ENCODE measurements at regions of chrX and their contacts with region 1.

Region 1: DNA sequence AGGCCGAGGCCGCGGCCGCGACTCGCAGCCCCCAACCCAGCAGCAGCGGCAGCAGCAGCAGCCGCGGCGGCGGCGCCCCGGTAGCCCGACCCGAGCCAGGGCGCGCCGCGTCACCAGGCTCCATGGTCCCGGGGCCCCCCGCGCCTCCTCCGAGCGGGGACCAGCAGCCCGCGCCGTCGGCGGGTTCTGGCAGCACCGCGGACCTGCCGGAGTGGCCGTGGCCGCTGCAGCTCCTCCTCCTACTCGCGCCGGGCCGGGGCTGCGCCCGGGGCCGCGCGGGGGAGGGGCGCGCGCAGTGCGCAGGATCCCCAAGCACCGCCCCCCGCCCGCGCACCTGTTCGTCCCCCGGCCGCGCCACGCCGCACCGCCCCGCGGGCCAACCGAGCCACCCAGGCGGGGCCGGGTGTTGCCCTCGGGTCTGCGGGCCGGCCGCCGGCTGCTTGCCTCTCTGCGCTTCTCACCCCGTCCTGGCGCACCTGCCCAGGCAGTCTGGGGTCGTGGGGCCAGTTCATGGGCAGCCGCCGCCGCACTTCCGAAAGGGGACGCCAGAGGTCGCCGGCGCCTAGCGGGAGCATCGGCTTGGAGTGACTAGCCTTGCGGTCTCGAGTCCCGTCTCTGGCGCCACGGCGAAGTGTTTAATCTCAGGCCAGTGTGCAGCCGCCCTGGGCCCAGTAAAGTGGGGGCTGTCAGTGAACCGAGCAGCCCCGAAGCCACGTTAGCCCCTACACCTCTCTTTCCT is at the start of gene SLC9A7:
- DNase-seq: peak; percentile 20 to 61
- ATAC-seq: peak; percentile 81 to 88
- H3K4me3 ChIP-seq: peak within 1 kb of the TSS; percentile 51 to 61 (median 58)
- H3K27ac ChIP-seq: peak within 1 kb of the TSS; percentile 61 to 79 (median 73)
- H3K4me1 ChIP-seq: peaks cover 0 to 4% of the 10 kb centered on the region in 2 donors
- H3K27me3 ChIP-seq: no peaks in the 10 kb centered on the region
- CTCF ChIP-seq: peak; percentile 79 to 95 (median 83)
- POLR2A ChIP-seq: peak; percentile 51 to 53
- total RNA-seq, gene SLC9A7: 13.3 to 27.4 (median 20.0) TPM

Region 2: GRCh38 chrX:46477435-46477834 is 281.6 kb before region 1 on chrX:
- in situ Hi-C with region 1: no loop called
- intact Hi-C with region 1: no loop called
- DNase-seq: no peak
- ATAC-seq: no peak
- H3K4me3 ChIP-seq: no peak overlapping the region
- H3K27ac ChIP-seq: no peak overlapping the region
- H3K4me1 ChIP-seq: no peaks in the 10 kb centered on the region
- H3K27me3 ChIP-seq: no peaks in the 10 kb centered on the region
- CTCF ChIP-seq: no peak
- POLR2A ChIP-seq: no peak

Region 3: DNA sequence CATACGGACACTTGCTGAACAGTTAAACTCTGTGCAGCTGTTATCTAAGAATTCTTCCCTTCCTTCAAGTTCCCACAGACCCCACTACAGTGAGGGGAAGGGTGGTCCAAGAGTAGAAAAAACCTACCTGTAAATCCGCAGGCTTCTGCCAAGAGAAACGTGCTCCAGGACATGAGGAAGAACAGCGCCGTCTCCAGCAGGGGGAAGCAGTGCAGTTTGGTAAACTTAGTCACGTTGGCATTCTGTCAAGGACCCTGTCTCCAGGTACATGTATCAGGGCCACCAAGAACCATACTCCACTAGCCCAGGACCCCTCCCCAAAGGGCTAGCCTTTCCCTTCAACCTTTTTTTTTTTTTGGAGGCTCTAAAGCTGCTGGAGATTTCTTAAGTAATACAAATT is 105.6 kb before region 1 on chrX:
- in situ Hi-C with region 1: no loop called
- intact Hi-C with region 1: no loop called
- DNase-seq: no peak
- ATAC-seq: no peak
- H3K4me3 ChIP-seq: no peak overlapping the region
- H3K27ac ChIP-seq: no peak overlapping the region
- H3K4me1 ChIP-seq: peaks cover 0 to 12% of the 10 kb centered on the region in 2 donors
- H3K27me3 ChIP-seq: no peaks in the 10 kb centered on the region
- CTCF ChIP-seq: no peak
- POLR2A ChIP-seq: no peak

Region 4: GRCh38 chrX:46796574-46797191 is 37.6 kb after region 1 on chrX:
- in situ Hi-C with region 1: no loop called
- intact Hi-C with region 1: loop called (anchors 1 kb)
- DNase-seq: peak; percentile 28 to 50
- ATAC-seq: peak in 1 of 2 donors; percentile 75
- H3K4me3 ChIP-seq: no peak overlapping the region
- H3K27ac ChIP-seq: no peak overlapping the region
- H3K4me1 ChIP-seq: no peaks in the 10 kb centered on the region
- H3K27me3 ChIP-seq: no peaks in the 10 kb centered on the region
- CTCF ChIP-seq: peak; percentile 36 to 77 (median 63)
- POLR2A ChIP-seq: no peak

Region 5: DNA sequence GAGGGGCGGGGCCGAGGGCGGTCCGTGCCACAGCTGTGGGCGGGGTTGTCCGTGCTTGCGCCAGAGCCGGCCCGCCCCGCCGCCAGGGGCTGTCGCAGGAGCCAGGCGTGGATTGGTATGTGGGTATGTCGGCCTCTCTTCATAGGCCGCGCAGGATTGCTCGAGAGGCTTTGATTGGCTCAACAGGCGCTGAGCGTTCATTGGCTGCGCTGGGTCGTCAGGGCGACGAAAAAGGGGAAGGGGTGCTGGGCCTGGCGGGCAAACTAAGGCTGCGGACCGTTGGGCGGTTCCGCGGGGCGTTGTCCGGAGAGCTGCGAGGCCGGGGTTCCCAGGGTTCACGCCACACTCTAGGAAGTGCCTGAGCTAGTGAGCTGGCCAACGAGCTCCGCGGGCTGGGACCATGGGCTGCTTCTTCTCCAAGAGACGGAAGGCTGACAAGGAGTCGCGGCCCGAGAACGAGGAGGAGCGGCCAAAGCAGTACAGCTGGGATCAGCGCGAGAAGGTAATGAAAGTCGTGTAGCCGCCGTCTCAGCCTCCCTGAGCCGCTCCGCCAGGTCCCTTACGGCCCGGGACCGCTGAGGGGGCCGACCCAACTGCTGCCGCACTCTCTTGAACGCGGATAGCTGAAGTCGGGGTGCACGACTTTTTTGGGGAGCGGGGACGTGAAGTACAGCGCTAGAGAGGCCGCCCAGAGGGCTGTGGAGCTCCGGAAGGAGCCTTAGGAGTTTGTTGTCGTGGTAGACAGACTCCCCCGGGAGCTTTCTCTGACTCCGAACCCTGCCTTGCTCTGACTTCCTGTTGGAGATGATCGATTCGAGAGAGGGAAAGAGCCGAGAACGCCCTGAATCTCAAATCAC is 77.9 kb after region 1 on chrX and contains the start of gene RP2:
- in situ Hi-C with region 1: no loop called
- intact Hi-C with region 1: loop called (anchors 1 kb)
- DNase-seq: peak; percentile 85 to 89
- ATAC-seq: peak; percentile 99
- H3K4me3 ChIP-seq: peak within 1 kb of the TSS; percentile 72 to 86 (median 73)
- H3K27ac ChIP-seq: peak within 1 kb of the TSS; percentile 76 to 86 (median 82)
- H3K4me1 ChIP-seq: peaks cover 6 to 7% of the 10 kb centered on the region in 2 donors
- H3K27me3 ChIP-seq: no peaks in the 10 kb centered on the region
- CTCF ChIP-seq: peak in 2 of 5 experiments; percentile 19 to 26
- POLR2A ChIP-seq: peak; percentile 64 to 82
- total RNA-seq, gene RP2: 1.1 to 3.1 (median 2.7) TPM

Region 6: GRCh38 chrX:46978341-46979291 is 219.5 kb after region 1 on chrX:
- in situ Hi-C with region 1: no loop called
- intact Hi-C with region 1: loop called (anchors 1 kb)
- DNase-seq: peak in 1 of 2 donors; percentile 16
- ATAC-seq: peak in 1 of 2 donors; percentile 41
- H3K4me3 ChIP-seq: no peak overlapping the region
- H3K27ac ChIP-seq: no peak overlapping the region
- H3K4me1 ChIP-seq: no peaks in the 10 kb centered on the region
- H3K27me3 ChIP-seq: no peaks in the 10 kb centered on the region
- CTCF ChIP-seq: peak; percentile 16 to 60 (median 38)
- POLR2A ChIP-seq: no peak

Region 7: GRCh38 chrX:47030339-47030738 is 271.3 kb after region 1 on chrX:
- in situ Hi-C with region 1: loop called in 2 of 4 experiments (anchors 25 kb)
- intact Hi-C with region 1: no loop called
- DNase-seq: no peak
- ATAC-seq: no peak
- H3K4me3 ChIP-seq: no peak overlapping the region
- H3K27ac ChIP-seq: no peak overlapping the region
- H3K4me1 ChIP-seq: no peaks in the 10 kb centered on the region
- H3K27me3 ChIP-seq: peaks cover 0 to 3% (median 0%) of the 10 kb centered on the region in 3 donors
- CTCF ChIP-seq: peak; percentile 14 to 55 (median 44)
- POLR2A ChIP-seq: no peak

Region 8: GRCh38 chrX:47093248-47093647 is 334.2 kb after region 1 on chrX:
- in situ Hi-C with region 1: no loop called
- intact Hi-C with region 1: loop called (anchors 5 kb)
- DNase-seq: no peak
- ATAC-seq: no peak
- H3K4me3 ChIP-seq: no peak overlapping the region
- H3K27ac ChIP-seq: no peak overlapping the region
- H3K4me1 ChIP-seq: no peaks in the 10 kb centered on the region
- H3K27me3 ChIP-seq: peaks cover 0 to 3% (median 0%) of the 10 kb centered on the region in 3 donors
- CTCF ChIP-seq: peak in 3 of 5 experiments; percentile 15 to 33 (median 25)
- POLR2A ChIP-seq: no peak

Measured in gastrocnemius medialis (tissue), 4 donors.